ENCODE measurements at regions of chr9 and their contacts with region 1.

Region 1: GRCh38 chr9:95510709-95511615 is 5.8 kb downstream of the PTCH1 start:
- DNase-seq: peak; percentile 92 to 95
- ATAC-seq: peak; percentile 88
- H3K4me3 ChIP-seq: peak overlapping the region; percentile 65 to 74
- H3K27ac ChIP-seq: peak overlapping the region in 1 of 2 donors; percentile 62
- H3K4me1 ChIP-seq: no peaks in the 10 kb centered on the region
- H3K27me3 ChIP-seq: no peaks in the 10 kb centered on the region

Region 2: GRCh38 chr9:93962561-93963440 is 1548.2 kb before region 1 on chr9:
- intact Hi-C with region 1: loop called in 1 of 2 experiments (anchors 10 kb)
- DNase-seq: peak; percentile 87 to 90
- ATAC-seq: peak; percentile 90
- H3K4me3 ChIP-seq: no peak overlapping the region
- H3K27ac ChIP-seq: no peak overlapping the region
- H3K4me1 ChIP-seq: no peaks in the 10 kb centered on the region
- H3K27me3 ChIP-seq: no peaks in the 10 kb centered on the region

Region 3: GRCh38 chr9:95171001-95171400 is 340.0 kb before region 1 on chr9:
- intact Hi-C with region 1: no loop called
- DNase-seq: no peak
- ATAC-seq: no peak
- H3K4me3 ChIP-seq: no peak overlapping the region
- H3K27ac ChIP-seq: no peak overlapping the region
- H3K4me1 ChIP-seq: no peaks in the 10 kb centered on the region
- H3K27me3 ChIP-seq: no peaks in the 10 kb centered on the region

Region 4: GRCh38 chr9:95317119-95317892 is 193.7 kb before region 1 on chr9 and contains the start of gene FANCC:
- intact Hi-C with region 1: loop called in 1 of 2 experiments (anchors 5 kb)
- DNase-seq: peak; percentile 95 to 99
- ATAC-seq: peak; percentile 96
- H3K4me3 ChIP-seq: peak within 1 kb of the TSS; percentile 66 to 73
- H3K27ac ChIP-seq: peak within 1 kb of the TSS in 1 of 2 donors; percentile 85
- H3K4me1 ChIP-seq: no peaks in the 10 kb centered on the region
- H3K27me3 ChIP-seq: no peaks in the 10 kb centered on the region
- total RNA-seq, gene FANCC: 5.7 to 10.9 TPM

Region 5: GRCh38 chr9:95626885-95627558 is 116.1 kb after region 1 on chr9:
- intact Hi-C with region 1: loop called in 1 of 2 experiments (anchors 10 kb)
- DNase-seq: peak; percentile 84 to 93
- ATAC-seq: peak; percentile 75
- H3K4me3 ChIP-seq: no peak overlapping the region
- H3K27ac ChIP-seq: no peak overlapping the region
- H3K4me1 ChIP-seq: peaks cover 0 to 1% of the 10 kb centered on the region in 2 donors
- H3K27me3 ChIP-seq: no peaks in the 10 kb centered on the region

Region 6: DNA sequence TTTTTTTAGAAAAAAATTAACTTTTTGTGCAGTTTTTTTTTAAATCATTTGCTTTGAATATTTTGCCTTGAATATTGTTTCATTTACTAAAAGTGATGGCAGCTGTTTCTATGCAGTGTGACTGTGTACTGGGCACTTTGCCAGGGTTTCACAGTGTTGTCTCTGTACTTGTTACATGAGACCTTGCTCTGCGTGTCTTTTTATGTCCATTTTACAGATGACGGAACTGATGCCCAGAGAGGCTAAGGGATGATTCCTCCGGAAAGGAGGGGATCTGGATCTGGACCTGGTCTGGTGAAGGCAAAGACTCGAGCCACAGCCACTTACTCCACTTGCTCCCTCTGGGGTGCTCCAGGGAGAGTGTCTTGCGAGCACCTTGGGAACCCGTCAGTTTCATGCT is 130.6 kb after region 1 on chr9:
- intact Hi-C with region 1: loop called in 1 of 2 experiments (anchors 10 kb)
- DNase-seq: no peak
- ATAC-seq: no peak
- H3K4me3 ChIP-seq: no peak overlapping the region
- H3K27ac ChIP-seq: no peak overlapping the region
- H3K4me1 ChIP-seq: peaks cover 4 to 8% of the 10 kb centered on the region in 2 donors
- H3K27me3 ChIP-seq: no peaks in the 10 kb centered on the region

Region 7: GRCh38 chr9:95875305-95876137 is 364.6 kb after region 1 on chr9 and contains the start of gene ERCC6L2:
- intact Hi-C with region 1: loop called (anchors 5 to 10 kb)
- DNase-seq: peak; percentile 96 to 98
- ATAC-seq: peak; percentile 99
- H3K4me3 ChIP-seq: peak within 1 kb of the TSS; percentile 62 to 80
- H3K27ac ChIP-seq: peak within 1 kb of the TSS; percentile 96 to 99
- H3K4me1 ChIP-seq: peaks cover 0 to 3% of the 10 kb centered on the region in 2 donors
- H3K27me3 ChIP-seq: no peaks in the 10 kb centered on the region
- total RNA-seq, gene ERCC6L2: 46.4 to 54.5 TPM

Region 8: GRCh38 chr9:96061293-96061987 is 550.5 kb after region 1 on chr9:
- intact Hi-C with region 1: loop called in 1 of 2 experiments (anchors 10 kb)
- DNase-seq: peak in 1 of 2 donors; percentile 80
- ATAC-seq: peak; percentile 75
- H3K4me3 ChIP-seq: no peak overlapping the region
- H3K27ac ChIP-seq: no peak overlapping the region
- H3K4me1 ChIP-seq: no peaks in the 10 kb centered on the region
- H3K27me3 ChIP-seq: no peaks in the 10 kb centered on the region

Measured in aorta (tissue), 5 donors.